Caco-2 (cell line): ENCODE measurements at regions of chr2 and their contacts with region 1.

Region 1: DNA sequence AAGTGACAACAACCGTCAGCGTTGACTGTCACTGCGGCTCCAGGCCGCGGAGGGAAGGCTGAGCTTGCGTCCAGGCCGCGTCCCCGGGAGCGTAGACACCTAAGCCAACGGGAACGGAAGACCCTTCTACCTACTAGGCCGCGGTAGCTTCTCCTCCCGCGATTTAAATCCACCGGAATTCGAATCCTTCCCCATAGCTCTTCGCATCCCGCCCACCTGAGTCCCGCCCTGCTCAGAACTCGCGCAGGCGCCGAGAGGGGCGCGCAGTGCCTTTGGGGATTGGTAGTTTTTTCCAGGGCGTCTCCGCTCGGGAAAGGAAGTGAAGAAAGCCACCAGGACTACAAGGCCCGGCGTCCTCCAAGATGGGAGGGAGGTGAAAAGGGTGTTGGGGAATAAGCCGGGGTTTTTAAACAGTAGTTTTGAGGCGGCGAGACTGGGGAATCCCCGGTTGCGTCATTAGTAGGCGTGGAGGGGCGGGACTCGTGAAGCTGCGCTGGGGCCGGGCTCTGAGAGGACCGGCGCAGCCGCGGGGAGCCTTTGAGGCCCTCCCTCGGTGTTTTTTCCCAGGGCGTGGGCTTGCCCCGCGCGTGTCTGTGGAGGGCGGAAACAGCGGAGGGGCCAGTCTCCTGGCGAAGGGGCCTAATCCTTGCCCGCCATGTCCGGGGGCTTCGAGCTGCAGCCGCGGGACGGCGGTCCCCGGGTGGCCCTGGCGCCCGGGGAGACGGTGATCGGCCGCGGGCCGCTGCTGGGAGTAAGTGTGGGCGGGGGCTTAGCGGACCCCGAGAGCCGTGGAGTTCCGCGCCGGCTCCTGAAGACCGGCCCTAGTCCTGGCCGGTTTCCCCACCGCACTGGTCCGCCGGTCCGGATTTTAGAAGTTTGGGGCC is at the starts of genes APLF and FBXO48:
- DNase-seq: peak; percentile 98 to 99
- H3K4me3 ChIP-seq: peak within 1 kb of the TSS; percentile 95
- H3K4me3 Mint-ChIP-seq: peak within 1 kb of the TSS; percentile 95
- H3K27ac Mint-ChIP-seq: peak within 1 kb of the TSS; percentile 95
- H3K4me1 ChIP-seq: peaks cover 36% of the 10 kb centered on the region
- H3K4me1 Mint-ChIP-seq: peaks cover 27% of the 10 kb centered on the region
- H3K27me3 ChIP-seq: no peaks in the 10 kb centered on the region
- H3K27me3 Mint-ChIP-seq: no peaks in the 10 kb centered on the region
- CTCF ChIP-seq: no peak
- total RNA-seq, gene APLF: 3.9 and 4.0 TPM in 2 replicates
- total RNA-seq, gene FBXO48: 1.1 and 1.2 TPM in 2 replicates

Region 2: DNA sequence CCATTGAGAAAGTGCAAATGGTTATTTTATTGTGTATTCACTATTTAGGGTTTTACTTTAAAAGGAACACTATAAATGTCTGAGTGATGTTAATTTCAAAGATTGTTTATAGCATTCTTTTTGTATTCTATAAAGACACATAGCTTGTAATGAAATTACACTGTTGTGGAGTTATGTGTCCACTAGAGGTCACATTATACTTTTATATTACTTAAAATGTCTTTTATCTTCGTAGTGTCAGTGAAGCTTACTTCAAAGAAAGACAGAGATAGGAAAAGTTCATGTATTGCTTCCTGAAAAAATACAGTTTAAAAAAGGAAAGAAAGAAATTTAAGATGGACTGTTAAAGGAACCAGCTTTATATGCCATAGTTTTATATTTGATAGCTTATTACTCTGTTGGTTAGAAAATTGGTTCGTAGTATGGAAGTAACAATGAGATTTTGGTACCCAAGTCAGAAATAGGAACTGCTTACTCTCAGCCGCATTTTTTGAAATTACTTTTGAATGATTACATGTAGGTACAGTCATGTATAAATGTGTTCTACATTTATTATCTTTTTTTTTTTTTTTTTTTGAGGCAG is 20.5 kb after region 1 on chr2:
- CTCF ChIA-PET with region 1: interaction called, 11 read pairs
- POLR2A ChIA-PET with region 1: no interaction called
- intact Hi-C with region 1: no loop called
- DNase-seq: no peak
- H3K4me3 ChIP-seq: no peak overlapping the region
- H3K4me3 Mint-ChIP-seq: no peak overlapping the region
- H3K27ac Mint-ChIP-seq: no peak overlapping the region
- H3K4me1 ChIP-seq: no peaks in the 10 kb centered on the region
- H3K4me1 Mint-ChIP-seq: no peaks in the 10 kb centered on the region
- H3K27me3 ChIP-seq: no peaks in the 10 kb centered on the region
- H3K27me3 Mint-ChIP-seq: no peaks in the 10 kb centered on the region
- CTCF ChIP-seq: peak; percentile 43 to 52

Region 3: GRCh38 chr2:68646302-68646701 is 179.0 kb after region 1 on chr2:
- CTCF ChIA-PET with region 1: interaction called, 16 read pairs
- POLR2A ChIA-PET with region 1: no interaction called
- intact Hi-C with region 1: loop called (anchors 1 kb)
- DNase-seq: peak in 1 of 2 experiments; percentile 19
- H3K4me3 ChIP-seq: no peak overlapping the region
- H3K4me3 Mint-ChIP-seq: no peak overlapping the region
- H3K27ac Mint-ChIP-seq: no peak overlapping the region
- H3K4me1 ChIP-seq: no peaks in the 10 kb centered on the region
- H3K4me1 Mint-ChIP-seq: no peaks in the 10 kb centered on the region
- H3K27me3 ChIP-seq: peaks cover 5% of the 10 kb centered on the region
- H3K27me3 Mint-ChIP-seq: peaks cover 44% of the 10 kb centered on the region
- CTCF ChIP-seq: peak in 1 of 2 experiments; percentile 27

Region 4: DNA sequence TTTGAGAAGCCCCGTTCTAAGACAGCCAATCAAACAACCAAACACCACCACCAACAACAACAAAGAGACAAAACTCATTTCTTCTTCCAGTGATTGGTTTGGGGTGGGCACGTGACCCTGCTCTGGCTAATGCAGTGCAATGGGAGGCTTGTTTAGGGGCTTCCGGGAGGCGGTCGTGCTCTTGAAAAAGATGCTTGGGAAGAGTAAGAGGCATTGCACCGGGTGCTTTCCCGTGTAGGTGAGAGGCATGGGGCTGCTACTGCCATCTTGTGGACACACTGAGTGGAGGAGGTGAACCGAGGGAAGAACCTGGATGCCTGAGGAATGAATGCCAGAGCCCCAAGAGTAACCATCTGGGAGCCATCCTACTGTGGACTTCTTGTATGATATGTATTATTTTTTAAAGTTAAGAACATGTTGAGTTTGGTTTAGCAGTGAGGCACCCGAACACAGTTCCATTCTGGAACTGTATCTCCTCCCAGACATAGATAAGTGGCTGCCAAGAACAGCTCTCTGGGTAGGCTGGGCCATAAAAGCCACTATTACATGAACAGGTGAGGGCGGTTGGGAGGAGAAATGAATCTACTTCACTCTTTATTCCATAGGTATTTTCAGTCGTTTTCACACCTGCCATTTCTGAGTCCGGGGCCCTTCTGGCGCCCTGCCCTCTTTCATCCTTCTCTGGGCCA is 248.2 kb after region 1 on chr2:
- CTCF ChIA-PET with region 1: interaction called, 5 read pairs
- POLR2A ChIA-PET with region 1: no interaction called
- intact Hi-C with region 1: loop called (anchors 1 kb)
- DNase-seq: peak; percentile 75 to 78
- H3K4me3 ChIP-seq: no peak overlapping the region
- H3K4me3 Mint-ChIP-seq: no peak overlapping the region
- H3K27ac Mint-ChIP-seq: no peak overlapping the region
- H3K4me1 ChIP-seq: no peaks in the 10 kb centered on the region; the same call in 1 of the 2 replicates
- H3K4me1 Mint-ChIP-seq: no peaks in the 10 kb centered on the region
- H3K27me3 ChIP-seq: 0 out of 2 replicates have a peak, but pooled peaks cover 2% of the 10 kb centered on the region
- H3K27me3 Mint-ChIP-seq: peaks cover 17% of the 10 kb centered on the region
- CTCF ChIP-seq: peak; percentile 72 to 91

Region 5: DNA sequence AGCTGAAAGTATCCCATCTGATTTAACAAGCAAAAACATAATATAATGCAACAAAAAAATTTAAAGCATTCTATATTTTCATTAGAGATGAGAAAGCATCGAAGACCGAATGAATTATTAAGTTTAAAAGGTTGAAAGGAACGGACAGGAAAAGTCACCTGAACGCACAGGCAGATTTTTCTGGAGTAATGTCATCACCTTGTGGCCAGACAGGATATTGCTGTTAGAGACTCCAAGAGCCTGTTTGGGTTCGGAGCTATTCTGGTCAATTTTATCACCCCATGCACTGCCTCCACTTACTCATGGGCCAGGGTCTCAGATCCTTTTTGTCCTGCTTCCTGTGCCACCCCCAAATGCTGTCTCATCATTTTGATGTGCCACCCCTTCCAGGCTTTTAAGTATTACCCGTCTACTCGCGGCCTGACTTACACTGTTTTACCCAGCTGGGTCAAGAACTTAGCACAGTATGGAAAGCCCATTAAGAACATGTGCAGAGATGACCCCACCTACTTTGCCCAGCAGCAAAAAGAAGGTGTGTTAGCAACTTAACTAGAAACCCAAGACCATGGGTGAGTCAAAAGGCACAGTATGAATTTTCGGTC is 458.1 kb after region 1 on chr2:
- CTCF ChIA-PET with region 1: interaction called, 10 read pairs
- POLR2A ChIA-PET with region 1: no interaction called
- intact Hi-C with region 1: loop called (anchors 1 kb)
- DNase-seq: peak in 1 of 2 experiments; percentile 63
- H3K4me3 ChIP-seq: no peak overlapping the region
- H3K4me3 Mint-ChIP-seq: no peak overlapping the region
- H3K27ac Mint-ChIP-seq: no peak overlapping the region
- H3K4me1 ChIP-seq: no peaks in the 10 kb centered on the region
- H3K4me1 Mint-ChIP-seq: no peaks in the 10 kb centered on the region
- H3K27me3 ChIP-seq: no peaks in the 10 kb centered on the region
- H3K27me3 Mint-ChIP-seq: peaks cover 10% of the 10 kb centered on the region
- CTCF ChIP-seq: peak; percentile 87 to 88